ENCODE measurements at regions of chr2 and their contacts with region 1.

Region 1: DNA sequence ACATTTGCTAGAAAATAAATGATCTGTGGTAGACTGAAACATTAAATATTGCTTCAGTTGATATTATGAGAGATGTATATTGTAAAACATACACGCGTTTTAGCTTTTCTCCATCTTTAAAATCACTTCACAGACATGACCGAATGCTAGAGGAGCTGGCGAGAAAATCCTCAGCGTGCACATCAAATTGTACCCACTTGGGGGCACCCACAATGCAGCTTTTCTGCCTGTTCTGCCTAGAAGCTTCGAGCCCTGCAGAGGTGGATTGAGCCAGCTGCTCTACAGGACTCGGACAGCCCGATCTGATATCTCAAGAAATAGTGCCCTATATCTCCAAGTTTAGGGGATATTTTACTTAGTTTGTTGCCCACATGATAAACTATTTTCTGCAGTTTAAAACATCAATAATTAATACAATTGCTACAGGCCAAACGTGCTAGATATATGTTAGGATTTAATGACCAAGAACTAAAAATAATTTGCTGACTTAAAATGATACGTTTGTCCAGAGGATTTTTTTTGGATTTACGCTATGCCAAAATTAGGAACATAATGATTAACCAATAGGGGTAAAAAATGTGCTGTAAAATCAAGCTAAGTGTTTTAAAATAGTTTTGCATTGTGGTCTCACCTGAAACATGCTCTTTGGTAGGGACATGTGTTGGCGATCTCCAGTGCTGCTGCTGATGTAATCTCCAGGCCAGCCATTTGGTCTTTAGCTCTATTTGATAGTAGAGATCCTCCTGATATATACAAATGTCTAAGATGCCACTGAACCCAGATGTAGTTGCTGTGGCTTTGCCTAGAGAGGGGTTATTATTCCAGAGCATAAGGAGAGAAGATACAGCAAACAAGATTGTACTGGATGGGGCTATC is 22.3 kb upstream of the ATP5MC3 start:
- DNase-seq: peak; percentile 81
- H3K4me3 Mint-ChIP-seq: no peak overlapping the region
- H3K27ac Mint-ChIP-seq: no peak overlapping the region
- H3K4me1 Mint-ChIP-seq: peaks cover 6% of the 10 kb centered on the region
- H3K27me3 Mint-ChIP-seq: peaks cover 34% of the 10 kb centered on the region

Region 2: GRCh38 chr2:175167792-175168563 is 35.9 kb before region 1 on chr2 and contains the start of gene ATF2:
- intact Hi-C with region 1: no loop called
- DNase-seq: peak; percentile 99
- H3K4me3 Mint-ChIP-seq: peak within 1 kb of the TSS; percentile 100
- H3K27ac Mint-ChIP-seq: peak within 1 kb of the TSS; percentile 100
- H3K4me1 Mint-ChIP-seq: peaks cover 33% of the 10 kb centered on the region
- H3K27me3 Mint-ChIP-seq: no peaks in the 10 kb centered on the region
- total RNA-seq, gene ATF2: 58.8 and 60.2 TPM in 2 replicates

Region 3: DNA sequence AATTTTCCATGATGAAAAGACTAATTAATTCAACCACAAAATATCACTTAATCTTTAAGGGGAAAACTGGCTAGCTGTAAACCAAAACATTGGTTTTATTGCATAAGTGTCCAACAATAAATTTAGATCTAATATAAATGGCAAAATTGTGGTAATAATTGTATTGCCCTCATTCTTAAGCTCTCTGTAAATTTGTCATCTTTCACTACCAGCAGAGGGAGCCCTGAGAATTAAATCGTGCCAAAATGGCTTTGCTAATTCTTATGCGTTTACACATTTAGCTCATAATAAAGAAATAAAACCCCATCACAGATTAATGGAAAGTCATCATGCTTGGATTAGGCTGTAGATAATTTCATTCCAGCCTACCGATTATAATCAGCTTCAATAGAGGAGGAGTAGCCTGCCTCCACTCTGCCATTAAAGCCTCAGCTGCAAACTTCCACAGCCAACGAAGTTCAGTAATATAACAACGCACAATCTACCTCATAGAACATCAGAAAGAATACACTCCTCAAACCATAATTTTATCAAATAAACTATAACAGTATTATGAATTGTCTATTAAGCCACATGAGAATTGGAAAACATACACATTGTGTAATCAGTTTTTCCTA is 47.7 kb after region 1 on chr2:
- intact Hi-C with region 1: loop called (anchors 5 kb)
- DNase-seq: peak; percentile 63
- H3K4me3 Mint-ChIP-seq: no peak overlapping the region
- H3K27ac Mint-ChIP-seq: no peak overlapping the region
- H3K4me1 Mint-ChIP-seq: peaks cover 3% of the 10 kb centered on the region
- H3K27me3 Mint-ChIP-seq: peaks cover 31% of the 10 kb centered on the region

Region 4: DNA sequence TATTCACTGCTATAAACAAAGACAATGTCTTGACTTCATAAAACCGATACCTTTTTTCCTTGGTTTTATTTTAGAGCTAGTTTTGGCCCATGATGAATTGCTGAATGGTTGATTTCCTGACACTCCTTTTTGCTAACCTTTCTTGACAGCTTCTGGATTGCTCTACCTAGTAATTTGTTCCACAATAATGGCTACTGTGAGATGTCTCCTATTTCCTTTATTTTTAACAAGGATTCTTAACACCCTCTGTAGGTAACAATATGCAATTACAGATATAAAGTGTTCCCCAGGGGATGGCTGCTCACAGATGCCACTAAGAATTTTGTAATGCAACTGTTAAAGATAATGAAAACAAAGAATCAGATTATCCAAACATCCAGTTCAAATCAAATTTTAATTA is 78.4 kb after region 1 on chr2:
- intact Hi-C with region 1: loop called (anchors 1 kb)
- DNase-seq: no peak
- H3K4me3 Mint-ChIP-seq: no peak overlapping the region
- H3K27ac Mint-ChIP-seq: no peak overlapping the region
- H3K4me1 Mint-ChIP-seq: peaks cover 2% of the 10 kb centered on the region
- H3K27me3 Mint-ChIP-seq: peaks cover 31% of the 10 kb centered on the region

Region 5: DNA sequence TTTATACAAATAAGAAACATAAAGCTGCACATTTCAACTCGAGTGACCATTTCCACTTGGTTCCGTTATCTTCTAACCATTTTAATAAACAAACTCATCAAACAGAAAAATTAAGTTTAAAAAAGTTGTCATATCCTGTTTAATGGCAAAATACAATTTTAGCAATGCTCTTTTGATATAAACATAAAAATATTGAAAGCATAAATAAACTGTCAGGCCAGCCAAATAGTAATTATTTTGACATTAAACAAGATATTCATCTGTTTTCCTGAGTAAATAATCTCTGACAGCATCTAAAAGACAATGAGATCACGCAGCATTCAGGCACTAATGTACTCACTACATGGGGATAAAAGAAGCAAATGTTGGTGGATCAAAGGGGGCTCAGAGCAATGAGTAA is 122.9 kb after region 1 on chr2:
- intact Hi-C with region 1: loop called (anchors 1 kb)
- DNase-seq: no peak
- H3K4me3 Mint-ChIP-seq: no peak overlapping the region
- H3K27ac Mint-ChIP-seq: no peak overlapping the region
- H3K4me1 Mint-ChIP-seq: no peaks in the 10 kb centered on the region
- H3K27me3 Mint-ChIP-seq: no peaks in the 10 kb centered on the region

Region 6: DNA sequence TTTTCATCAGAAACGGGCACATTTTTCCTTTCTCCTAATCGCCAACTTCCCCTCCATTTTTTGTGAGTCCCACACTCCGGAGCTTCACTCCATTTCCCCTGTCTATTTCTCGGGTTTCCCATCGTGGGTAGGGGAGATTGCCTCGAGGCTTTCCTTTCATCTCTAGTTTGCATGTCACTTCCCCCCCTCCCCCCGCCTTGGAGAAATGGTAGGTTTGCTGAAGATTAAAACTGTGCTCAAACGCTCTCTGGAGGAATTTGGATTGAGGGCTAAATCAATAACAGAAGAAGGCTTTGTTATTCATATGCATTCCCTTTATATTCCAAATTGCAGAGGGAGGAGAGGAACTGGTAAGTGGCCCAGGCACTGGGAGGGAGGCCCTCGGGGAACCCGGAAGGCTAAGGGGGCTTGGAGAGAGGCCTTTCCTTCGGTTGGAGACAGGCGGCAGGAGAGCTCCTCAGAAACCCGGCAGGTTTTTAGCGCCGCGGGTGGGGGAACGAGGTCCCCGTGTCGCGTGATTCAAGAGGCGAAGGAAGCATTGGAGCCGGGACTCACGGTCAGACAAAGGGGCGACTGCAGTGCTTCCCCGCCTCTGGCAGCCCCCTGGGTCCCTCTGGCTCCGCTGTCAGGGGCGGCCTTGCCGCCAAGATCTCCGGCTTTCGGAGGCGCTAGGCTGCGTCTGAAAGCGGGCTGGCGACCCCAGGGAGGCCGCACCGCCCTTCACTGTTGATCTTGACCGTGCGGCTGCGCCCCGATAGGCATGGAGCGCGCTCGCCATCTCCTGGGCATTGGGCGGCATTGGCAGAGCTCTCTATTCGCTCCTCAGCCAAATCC is 893.3 kb after region 1 on chr2:
- intact Hi-C with region 1: loop called (anchors 2 kb)
- DNase-seq: peak; percentile 85
- H3K4me3 Mint-ChIP-seq: peak overlapping the region; percentile 81
- H3K27ac Mint-ChIP-seq: no peak overlapping the region
- H3K4me1 Mint-ChIP-seq: peaks cover 13% of the 10 kb centered on the region
- H3K27me3 Mint-ChIP-seq: peaks cover 83% of the 10 kb centered on the region